ENCODE measurements at regions of chr12 and their contacts with region 1.

Region 1: GRCh38 chr12:79690638-79691493 is at the start of gene PAWR:
- DNase-seq: peak; percentile 73 to 90
- ATAC-seq: peak; percentile 88
- H3K4me3 ChIP-seq: peak within 1 kb of the TSS; percentile 96 to 99
- H3K27ac ChIP-seq: peak within 1 kb of the TSS; percentile 71 to 96
- H3K4me1 ChIP-seq: peaks cover 0 to 4% of the 10 kb centered on the region in 2 donors
- H3K27me3 ChIP-seq: no peaks in the 10 kb centered on the region
- total RNA-seq, gene PAWR: 110 to 150 TPM

Region 2: GRCh38 chr12:79407671-79408622 is 282.9 kb before region 1 on chr12:
- intact Hi-C with region 1: loop called in 1 of 2 experiments (anchors 5 kb)
- DNase-seq: peak in 1 of 2 donors; percentile 50
- ATAC-seq: peak; percentile 86
- H3K4me3 ChIP-seq: no peak overlapping the region
- H3K27ac ChIP-seq: peak overlapping the region; percentile 57 to 90
- H3K4me1 ChIP-seq: peaks cover 2 to 3% of the 10 kb centered on the region in 2 donors
- H3K27me3 ChIP-seq: no peaks in the 10 kb centered on the region

Region 3: DNA sequence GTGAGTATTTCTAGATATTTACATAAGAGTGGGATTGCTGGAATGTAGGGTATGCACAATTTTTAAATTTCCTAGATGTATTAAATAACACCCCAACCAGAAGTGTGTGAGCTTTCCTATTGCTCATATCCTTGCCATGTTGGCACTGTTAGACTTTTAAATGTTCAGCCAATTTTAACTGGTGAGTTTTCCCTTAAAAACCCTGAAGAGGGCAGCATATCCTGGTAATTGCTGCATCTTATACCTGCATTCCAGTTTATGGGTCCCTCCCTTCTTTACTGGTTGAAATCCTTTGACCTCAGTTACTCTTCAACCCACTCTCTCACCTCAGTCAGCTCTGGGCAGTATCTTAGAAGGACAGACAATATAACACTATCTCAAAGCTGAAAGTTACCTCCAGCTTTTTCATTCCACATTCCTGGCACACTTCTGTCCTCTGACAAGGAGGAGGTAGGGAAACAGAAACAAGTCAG is 270.7 kb before region 1 on chr12:
- intact Hi-C with region 1: loop called (anchors 5 kb)
- DNase-seq: no peak
- ATAC-seq: peak; percentile 46
- H3K4me3 ChIP-seq: no peak overlapping the region
- H3K27ac ChIP-seq: peak overlapping the region in 1 of 2 donors; percentile 36
- H3K4me1 ChIP-seq: peaks cover 1 to 8% of the 10 kb centered on the region in 2 donors
- H3K27me3 ChIP-seq: no peaks in the 10 kb centered on the region

Region 4: GRCh38 chr12:79569679-79570078 is 121.2 kb before region 1 on chr12:
- intact Hi-C with region 1: no loop called
- DNase-seq: no peak
- ATAC-seq: no peak
- H3K4me3 ChIP-seq: no peak overlapping the region
- H3K27ac ChIP-seq: no peak overlapping the region
- H3K4me1 ChIP-seq: peaks cover 0 to 3% of the 10 kb centered on the region in 2 donors
- H3K27me3 ChIP-seq: no peaks in the 10 kb centered on the region

Region 5: DNA sequence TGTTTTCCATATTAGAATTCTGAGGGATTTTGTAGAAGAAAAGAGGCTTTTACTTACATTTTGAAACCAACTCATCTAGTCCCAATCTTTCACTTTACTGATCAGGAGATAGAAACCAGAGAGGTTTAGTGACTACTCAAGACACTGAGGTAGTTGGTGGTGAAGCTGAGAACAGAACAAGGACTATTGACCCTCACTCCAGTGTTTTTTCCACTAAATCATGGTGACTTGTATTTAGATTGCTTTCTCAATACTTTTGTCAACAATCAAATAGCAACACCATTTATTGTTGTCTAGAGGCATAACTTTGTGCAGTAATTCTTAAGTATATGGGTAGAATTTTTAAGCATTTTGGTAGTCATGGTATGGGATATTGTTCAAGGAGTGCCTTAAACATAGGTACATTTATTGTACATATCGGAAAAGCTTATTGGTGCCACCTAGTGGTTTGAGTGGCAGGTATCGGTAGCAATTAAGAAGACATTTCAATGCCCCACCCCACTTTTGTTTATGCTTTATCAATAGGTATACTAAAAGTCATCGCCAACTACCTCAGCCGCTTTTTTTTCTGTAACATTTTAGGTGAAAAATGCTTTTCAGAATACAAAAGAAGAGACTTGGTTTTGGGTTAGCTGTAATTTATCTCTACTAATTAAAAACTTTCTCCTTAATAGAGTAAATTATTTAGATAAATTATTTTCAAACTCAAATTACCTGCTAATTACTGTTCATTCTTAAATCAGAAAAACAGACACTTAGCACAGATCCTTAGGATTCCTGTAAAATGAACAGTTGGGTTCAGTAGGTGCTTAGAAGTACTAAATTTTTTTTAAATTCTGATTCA is 47.2 kb after region 1 on chr12:
- intact Hi-C with region 1: loop called in 1 of 2 experiments (anchors 5 kb)
- DNase-seq: no peak
- ATAC-seq: no peak
- H3K4me3 ChIP-seq: no peak overlapping the region
- H3K27ac ChIP-seq: no peak overlapping the region
- H3K4me1 ChIP-seq: no peaks in the 10 kb centered on the region
- H3K27me3 ChIP-seq: no peaks in the 10 kb centered on the region

Measured in aorta (tissue), 5 donors.